ENCODE measurements at regions of chr22 and their contacts with region 1.

Region 1: GRCh38 chr22:37591823-37592404 is 12.0 kb upstream of the LGALS2 start:
- DNase-seq: no peak
- H3K4me3 ChIP-seq: no peak overlapping the region
- H3K4me3 Mint-ChIP-seq: peak overlapping the region; percentile 59
- H3K27ac Mint-ChIP-seq: peak overlapping the region; percentile 65
- H3K4me1 ChIP-seq: peaks cover 10% of the 10 kb centered on the region
- H3K4me1 Mint-ChIP-seq: peaks cover 24% of the 10 kb centered on the region
- H3K27me3 ChIP-seq: no peaks in the 10 kb centered on the region
- H3K27me3 Mint-ChIP-seq: no peaks in the 10 kb centered on the region
- CTCF ChIP-seq: no peak

Region 2: DNA sequence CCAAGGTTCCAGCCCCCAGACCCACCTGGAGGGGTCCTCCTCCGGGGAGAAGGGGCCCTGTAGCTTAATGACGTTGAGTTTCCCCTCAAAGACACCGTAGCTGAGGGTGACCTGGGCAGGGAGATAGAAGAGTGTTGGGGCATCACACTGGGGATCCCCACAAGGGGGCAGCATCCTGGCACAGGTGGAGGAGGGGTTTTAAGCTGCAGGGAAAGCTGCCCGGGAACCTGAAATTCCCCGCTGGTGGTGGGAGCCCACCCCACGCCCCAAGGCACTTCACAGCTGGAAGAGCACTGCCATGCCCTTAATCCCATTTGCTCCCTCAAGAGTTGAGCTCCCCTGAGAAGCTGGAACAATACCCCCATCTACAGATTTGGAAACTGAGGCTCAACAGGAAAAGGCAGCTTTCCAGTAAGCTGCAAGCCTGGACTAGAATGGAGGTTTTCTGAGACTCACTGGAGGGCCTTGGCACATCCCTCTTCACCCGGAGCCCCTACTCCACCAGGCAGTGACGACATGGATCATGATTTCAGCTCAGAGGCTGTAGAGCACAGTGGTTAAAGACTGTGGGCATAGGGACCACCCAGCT is 119.4 kb before region 1 on chr22:
- CTCF ChIA-PET with region 1: interaction called, 14 read pairs
- POLR2A ChIA-PET with region 1: no interaction called
- intact Hi-C with region 1: no loop called
- DNase-seq: peak; percentile 61 to 69
- H3K4me3 ChIP-seq: no peak overlapping the region
- H3K4me3 Mint-ChIP-seq: no peak overlapping the region
- H3K27ac Mint-ChIP-seq: no peak overlapping the region
- H3K4me1 ChIP-seq: no peaks in the 10 kb centered on the region
- H3K4me1 Mint-ChIP-seq: no peaks in the 10 kb centered on the region
- H3K27me3 ChIP-seq: no peaks in the 10 kb centered on the region
- H3K27me3 Mint-ChIP-seq: no peaks in the 10 kb centered on the region
- CTCF ChIP-seq: peak; percentile 61 to 66

Region 3: GRCh38 chr22:37538590-37539357 is 53.1 kb before region 1 on chr22:
- CTCF ChIA-PET with region 1: interaction called, 37 read pairs
- POLR2A ChIA-PET with region 1: interaction called, 3 read pairs
- intact Hi-C with region 1: loop called (anchors 1 kb)
- DNase-seq: peak; percentile 92 to 94
- H3K4me3 ChIP-seq: no peak overlapping the region
- H3K4me3 Mint-ChIP-seq: peak overlapping the region; percentile 50
- H3K27ac Mint-ChIP-seq: peak overlapping the region; percentile 66
- H3K4me1 ChIP-seq: peaks cover 12% of the 10 kb centered on the region
- H3K4me1 Mint-ChIP-seq: peaks cover 18% of the 10 kb centered on the region
- H3K27me3 ChIP-seq: no peaks in the 10 kb centered on the region
- H3K27me3 Mint-ChIP-seq: no peaks in the 10 kb centered on the region
- CTCF ChIP-seq: peak; percentile 93 to 96

Region 4: GRCh38 chr22:37544955-37545699 is 46.8 kb before region 1 on chr22:
- CTCF ChIA-PET with region 1: interaction called, 37 read pairs
- POLR2A ChIA-PET with region 1: no interaction called
- intact Hi-C with region 1: loop called (anchors 1 kb)
- DNase-seq: peak; percentile 83 to 84
- H3K4me3 ChIP-seq: peak overlapping the region; percentile 20
- H3K4me3 Mint-ChIP-seq: peak overlapping the region; percentile 52
- H3K27ac Mint-ChIP-seq: peak overlapping the region; percentile 66
- H3K4me1 ChIP-seq: peaks cover 47% of the 10 kb centered on the region
- H3K4me1 Mint-ChIP-seq: peaks cover 34% of the 10 kb centered on the region
- H3K27me3 ChIP-seq: no peaks in the 10 kb centered on the region
- H3K27me3 Mint-ChIP-seq: no peaks in the 10 kb centered on the region
- CTCF ChIP-seq: peak; percentile 64 to 65

Region 5: GRCh38 chr22:37561212-37562048 is 30.5 kb before region 1 on chr22:
- CTCF ChIA-PET with region 1: interaction called, 54 read pairs
- POLR2A ChIA-PET with region 1: interaction called, 3 read pairs
- intact Hi-C with region 1: no loop called
- DNase-seq: peak; percentile 89 to 94
- H3K4me3 ChIP-seq: peak overlapping the region; percentile 81
- H3K4me3 Mint-ChIP-seq: peak overlapping the region; percentile 76
- H3K27ac Mint-ChIP-seq: peak overlapping the region; percentile 70
- H3K4me1 ChIP-seq: peaks cover 46% of the 10 kb centered on the region
- H3K4me1 Mint-ChIP-seq: peaks cover 22% of the 10 kb centered on the region
- H3K27me3 ChIP-seq: no peaks in the 10 kb centered on the region
- H3K27me3 Mint-ChIP-seq: no peaks in the 10 kb centered on the region
- CTCF ChIP-seq: peak; percentile 86 to 90

Region 6: DNA sequence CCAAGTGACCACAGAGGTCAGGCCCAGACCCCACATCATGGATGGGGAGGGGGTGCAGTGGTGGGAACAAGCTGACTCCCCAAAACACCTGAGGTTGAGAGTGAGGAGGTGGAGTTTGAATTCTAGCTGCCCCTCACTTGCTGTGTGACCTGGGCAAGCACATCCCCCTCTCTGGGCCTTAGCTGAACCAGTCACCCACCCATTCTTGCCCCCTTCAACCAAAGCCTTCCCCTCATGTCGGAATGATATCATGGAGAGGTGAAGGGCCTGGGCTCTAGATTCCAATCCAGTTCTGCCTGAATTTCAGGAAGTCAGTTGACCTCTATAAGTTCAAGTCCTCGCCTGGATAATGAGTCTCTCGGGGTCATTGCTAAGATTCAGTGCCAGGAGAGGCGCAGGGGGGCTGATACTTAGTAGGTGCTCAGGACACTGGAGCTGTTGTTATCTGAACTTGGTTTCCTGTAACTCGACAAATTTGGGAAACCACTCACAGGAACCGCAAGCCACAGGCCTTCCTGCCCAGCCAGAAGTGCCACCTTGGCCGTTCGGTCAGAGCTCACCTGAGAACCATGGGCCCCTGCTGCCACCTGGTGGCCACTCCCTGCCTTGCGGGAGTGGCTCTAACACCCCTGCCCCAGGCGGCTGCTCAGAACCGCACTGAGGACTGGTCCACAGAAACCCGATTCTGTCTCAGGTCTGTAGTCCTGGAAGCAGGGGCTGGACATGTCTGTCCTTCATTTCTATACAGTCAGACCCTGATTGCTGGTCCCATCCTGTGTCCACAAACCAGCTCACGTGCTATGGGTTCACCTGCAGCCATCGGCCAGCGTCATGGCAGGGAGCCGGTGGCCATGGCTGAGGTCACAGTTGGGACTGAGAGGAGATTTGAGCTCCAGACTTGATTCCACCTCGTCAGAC is 24.8 kb before region 1 on chr22:
- CTCF ChIA-PET with region 1: interaction called, 54 read pairs
- POLR2A ChIA-PET with region 1: interaction called, 7 read pairs
- intact Hi-C with region 1: loop called (anchors 1 kb)
- DNase-seq: peak; percentile 79 to 90
- H3K4me3 ChIP-seq: no peak overlapping the region
- H3K4me3 Mint-ChIP-seq: peak overlapping the region; percentile 16
- H3K27ac Mint-ChIP-seq: peak overlapping the region; percentile 48
- H3K4me1 ChIP-seq: peaks cover 80% of the 10 kb centered on the region
- H3K4me1 Mint-ChIP-seq: peaks cover 33% of the 10 kb centered on the region
- H3K27me3 ChIP-seq: no peaks in the 10 kb centered on the region
- H3K27me3 Mint-ChIP-seq: no peaks in the 10 kb centered on the region
- CTCF ChIP-seq: peak; percentile 90 to 93

Region 7: DNA sequence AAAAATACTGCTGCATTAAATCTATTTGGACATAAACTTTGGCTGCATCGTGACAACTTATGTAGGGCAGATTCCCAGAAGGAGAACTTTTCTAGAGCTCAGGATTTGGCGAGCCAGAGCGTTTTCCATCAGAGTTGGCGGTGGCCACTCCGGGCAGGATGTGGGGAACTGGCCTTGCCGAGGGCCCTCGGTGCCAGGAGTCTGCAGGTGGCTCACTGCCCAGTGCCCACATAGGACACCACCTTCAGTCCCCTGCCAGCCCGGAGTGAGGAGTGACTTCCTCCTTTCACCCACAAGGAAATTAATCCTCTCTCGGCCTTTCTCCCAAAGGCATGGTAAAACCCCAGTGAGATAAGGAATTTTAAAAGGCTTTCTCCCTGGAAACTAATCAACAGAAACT is 10.4 kb before region 1 on chr22:
- CTCF ChIA-PET with region 1: interaction called, 36 read pairs
- POLR2A ChIA-PET with region 1: interaction called, 8 read pairs
- intact Hi-C with region 1: loop called (anchors 1 kb)
- DNase-seq: no peak
- H3K4me3 ChIP-seq: no peak overlapping the region
- H3K4me3 Mint-ChIP-seq: no peak overlapping the region
- H3K27ac Mint-ChIP-seq: no peak overlapping the region
- H3K4me1 ChIP-seq: peaks cover 30% of the 10 kb centered on the region
- H3K4me1 Mint-ChIP-seq: peaks cover 24% of the 10 kb centered on the region
- H3K27me3 ChIP-seq: no peaks in the 10 kb centered on the region
- H3K27me3 Mint-ChIP-seq: no peaks in the 10 kb centered on the region
- CTCF ChIP-seq: no peak